ENCODE measurements at regions of chr12 and their contacts with region 1.

Region 1: DNA sequence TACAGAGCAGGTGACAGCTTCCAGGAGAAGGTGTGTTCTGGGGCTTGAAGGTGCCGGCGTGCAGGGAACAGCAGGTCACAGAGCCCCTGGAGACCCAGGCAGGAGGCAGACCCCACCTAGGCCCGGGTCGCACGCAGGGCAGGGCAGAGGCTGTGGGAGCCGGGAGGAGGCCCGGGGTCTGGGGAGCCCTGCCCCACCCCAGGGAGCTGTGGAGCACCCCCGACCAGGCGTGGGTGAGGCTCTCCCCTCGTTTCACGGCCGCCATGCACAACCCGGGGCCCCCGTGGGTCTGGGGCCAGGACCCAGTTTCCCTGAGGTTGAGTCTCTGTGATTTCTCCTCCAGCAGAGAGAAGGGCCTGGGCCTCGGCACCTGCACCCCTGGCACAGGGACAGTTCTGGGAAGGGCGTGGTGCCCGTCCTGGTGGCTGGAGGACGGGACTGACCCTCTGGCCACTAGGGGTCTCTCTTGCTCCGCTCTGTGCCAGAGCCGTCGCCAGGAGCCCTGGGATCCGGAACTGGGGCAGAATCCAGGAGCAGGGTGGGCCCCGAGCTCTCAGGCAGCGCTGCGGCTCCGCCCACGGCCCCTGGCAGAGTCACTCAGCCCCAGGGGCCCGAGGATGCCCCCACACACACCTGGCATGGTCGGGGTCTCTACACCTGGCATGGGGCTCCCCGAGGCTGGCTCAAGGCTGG is 75.2 kb upstream of the FBRSL1 start:
- DNase-seq: peak; percentile 80 to 88
- ATAC-seq: peak; percentile 87 to 98
- H3K4me3 ChIP-seq: no peak overlapping the region
- H3K27ac ChIP-seq: peak overlapping the region; percentile 65 to 85; a peak in 5 of 6 replicates
- H3K4me1 ChIP-seq: peaks cover 12% of the 10 kb centered on the region; the same call in 2 of the 3 replicates
- CTCF ChIP-seq: peak; percentile 94
- EP300 ChIP-seq: no peak
- POLR2A ChIP-seq: no peak
- RAD21 ChIP-seq: peak; percentile 98 to 99

Region 2: DNA sequence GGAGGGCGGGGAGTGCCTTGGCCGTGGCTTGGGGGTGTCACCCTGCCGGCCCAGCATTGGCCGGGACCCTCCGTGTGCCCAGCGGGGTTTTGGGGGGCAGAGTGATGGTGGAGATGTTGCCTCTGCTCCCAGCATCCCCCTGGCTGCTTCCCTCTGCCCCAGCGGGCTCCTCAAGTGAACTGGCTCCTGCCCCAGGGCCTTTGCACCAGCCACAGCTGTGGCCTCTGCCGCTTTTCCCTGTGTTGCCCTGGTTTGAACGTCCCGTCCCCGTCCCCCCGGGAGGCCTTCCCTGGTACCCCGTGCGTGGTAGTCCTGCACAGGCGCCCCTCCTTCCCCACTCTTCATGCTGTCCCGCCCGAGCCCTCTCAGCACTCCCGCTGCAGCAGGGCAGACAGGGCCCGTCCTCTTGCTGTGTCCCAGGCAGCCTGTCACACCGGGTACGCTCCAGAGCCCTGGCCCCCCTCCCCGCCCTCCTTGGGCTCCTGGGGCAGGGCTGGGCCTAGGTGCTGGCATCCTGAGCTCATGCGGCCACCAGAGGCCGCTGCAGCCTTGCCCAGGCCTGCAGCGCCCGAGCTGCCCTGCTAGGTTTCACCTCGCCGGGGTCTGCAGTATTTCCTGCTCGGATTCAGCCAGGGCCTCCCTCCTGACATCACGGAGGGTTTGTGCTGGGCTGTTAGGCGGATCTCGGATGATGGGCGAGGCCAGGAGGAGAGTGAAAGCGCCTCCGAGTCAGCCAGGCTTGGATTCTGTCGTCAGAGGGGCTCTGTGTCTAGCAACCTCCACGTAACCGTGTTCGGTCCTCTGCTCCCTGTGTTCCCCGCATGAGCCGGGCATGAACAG is 261.1 kb before region 1 on chr12:
- CTCF ChIA-PET with region 1: interaction called, 64 read pairs
- POLR2A ChIA-PET with region 1: interaction called, 3 read pairs
- DNase-seq: peak; percentile 82 to 85
- ATAC-seq: peak; percentile 85 to 98
- H3K4me3 ChIP-seq: no peak overlapping the region
- H3K27ac ChIP-seq: no peak overlapping the region
- H3K4me1 ChIP-seq: no peaks in the 10 kb centered on the region
- CTCF ChIP-seq: peak; percentile 94
- EP300 ChIP-seq: no peak
- POLR2A ChIP-seq: no peak
- RAD21 ChIP-seq: peak; percentile 92 to 95

Region 3: GRCh38 chr12:132275110-132275531 is 139.7 kb before region 1 on chr12:
- CTCF ChIA-PET with region 1: interaction called, 12 read pairs
- POLR2A ChIA-PET with region 1: no interaction called
- DNase-seq: peak; percentile 83 to 92
- ATAC-seq: peak; percentile 93 to 98
- H3K4me3 ChIP-seq: no peak overlapping the region
- H3K27ac ChIP-seq: peak overlapping the region in 1 of 2 experiments; percentile 54; a peak in 3 of 6 replicates
- H3K4me1 ChIP-seq: 0 out of 3 replicates have a peak, but pooled peaks cover 3% of the 10 kb centered on the region
- CTCF ChIP-seq: no peak
- EP300 ChIP-seq: no peak
- POLR2A ChIP-seq: no peak
- RAD21 ChIP-seq: no peak

Region 4: GRCh38 chr12:132373901-132374611 is 40.7 kb before region 1 on chr12:
- CTCF ChIA-PET with region 1: interaction called, 15 read pairs
- POLR2A ChIA-PET with region 1: no interaction called
- DNase-seq: no peak
- ATAC-seq: no peak; a peak in 1 of 6 replicates
- H3K4me3 ChIP-seq: no peak overlapping the region
- H3K27ac ChIP-seq: no peak overlapping the region
- H3K4me1 ChIP-seq: no peaks in the 10 kb centered on the region
- CTCF ChIP-seq: no peak
- EP300 ChIP-seq: no peak
- POLR2A ChIP-seq: no peak
- RAD21 ChIP-seq: no peak

Region 5: GRCh38 chr12:132523576-132524331 is 109.0 kb after region 1 on chr12:
- CTCF ChIA-PET with region 1: interaction called, 50 read pairs
- POLR2A ChIA-PET with region 1: no interaction called
- DNase-seq: peak; percentile 69 to 92
- ATAC-seq: peak; percentile 64 to 85
- H3K4me3 ChIP-seq: peak overlapping the region; percentile 20; the same call in 2 of the 3 replicates
- H3K27ac ChIP-seq: peak overlapping the region; percentile 69 to 87
- H3K4me1 ChIP-seq: peaks cover 53% of the 10 kb centered on the region
- CTCF ChIP-seq: peak; percentile 72
- EP300 ChIP-seq: no peak
- POLR2A ChIP-seq: no peak
- RAD21 ChIP-seq: peak; percentile 52 to 57; a peak in 4 of 5 replicates

Region 6: GRCh38 chr12:132577191-132577920 is 162.6 kb after region 1 on chr12:
- CTCF ChIA-PET with region 1: interaction called, 12 read pairs
- POLR2A ChIA-PET with region 1: no interaction called
- DNase-seq: no peak
- ATAC-seq: no peak
- H3K4me3 ChIP-seq: no peak overlapping the region
- H3K27ac ChIP-seq: no peak overlapping the region
- H3K4me1 ChIP-seq: no peaks in the 10 kb centered on the region
- CTCF ChIP-seq: no peak
- EP300 ChIP-seq: no peak
- POLR2A ChIP-seq: no peak
- RAD21 ChIP-seq: no peak

Region 7: GRCh38 chr12:132622437-132623334 is 207.9 kb after region 1 on chr12:
- CTCF ChIA-PET with region 1: interaction called, 132 read pairs
- POLR2A ChIA-PET with region 1: no interaction called
- DNase-seq: no peak
- ATAC-seq: no peak; a peak in 2 of 6 replicates
- H3K4me3 ChIP-seq: no peak overlapping the region
- H3K27ac ChIP-seq: no peak overlapping the region
- H3K4me1 ChIP-seq: peaks cover 10% of the 10 kb centered on the region
- CTCF ChIP-seq: no peak
- EP300 ChIP-seq: no peak
- POLR2A ChIP-seq: no peak
- RAD21 ChIP-seq: no peak

Region 8: GRCh38 chr12:132812631-132813305 is 398.0 kb after region 1 on chr12:
- CTCF ChIA-PET with region 1: no interaction called
- POLR2A ChIA-PET with region 1: no interaction called
- DNase-seq: no peak
- ATAC-seq: no peak
- H3K4me3 ChIP-seq: no peak overlapping the region
- H3K27ac ChIP-seq: no peak overlapping the region
- H3K4me1 ChIP-seq: no peaks in the 10 kb centered on the region
- CTCF ChIP-seq: no peak
- EP300 ChIP-seq: no peak
- POLR2A ChIP-seq: no peak
- RAD21 ChIP-seq: no peak